ENCODE measurements at regions of chr16 and their contacts with region 1.

Region 1: GRCh38 chr16:66977341-66978113 is 10.9 kb upstream of the CES4A start:
- DNase-seq: peak; percentile 95
- H3K4me3 Mint-ChIP-seq: no peak overlapping the region
- H3K27ac Mint-ChIP-seq: peak overlapping the region; percentile 54
- H3K4me1 Mint-ChIP-seq: peaks cover 50% of the 10 kb centered on the region
- H3K27me3 Mint-ChIP-seq: no peaks in the 10 kb centered on the region

Region 2: GRCh38 chr16:66954097-66954659 is 23.3 kb before region 1 on chr16:
- CTCF ChIA-PET with region 1: interaction called, 10 read pairs
- POLR2A ChIA-PET with region 1: no interaction called
- intact Hi-C with region 1: loop called (anchors 1 kb)
- DNase-seq: peak; percentile 88
- H3K4me3 Mint-ChIP-seq: no peak overlapping the region
- H3K27ac Mint-ChIP-seq: peak overlapping the region; percentile 9
- H3K4me1 Mint-ChIP-seq: peaks cover 15% of the 10 kb centered on the region
- H3K27me3 Mint-ChIP-seq: peaks cover 31% of the 10 kb centered on the region

Region 3: GRCh38 chr16:66991545-66992077 is 14.1 kb after region 1 on chr16:
- CTCF ChIA-PET with region 1: interaction called, 12 read pairs
- POLR2A ChIA-PET with region 1: no interaction called
- intact Hi-C with region 1: no loop called
- DNase-seq: no peak
- H3K4me3 Mint-ChIP-seq: no peak overlapping the region
- H3K27ac Mint-ChIP-seq: no peak overlapping the region
- H3K4me1 Mint-ChIP-seq: peaks cover 14% of the 10 kb centered on the region
- H3K27me3 Mint-ChIP-seq: no peaks in the 10 kb centered on the region

Region 4: GRCh38 chr16:67104061-67104460 is 126.5 kb after region 1 on chr16:
- CTCF ChIA-PET with region 1: interaction called, 10 read pairs
- POLR2A ChIA-PET with region 1: no interaction called
- intact Hi-C with region 1: loop called (anchors 1 kb)
- DNase-seq: no peak
- H3K4me3 Mint-ChIP-seq: peak overlapping the region; percentile 0
- H3K27ac Mint-ChIP-seq: no peak overlapping the region
- H3K4me1 Mint-ChIP-seq: peaks cover 7% of the 10 kb centered on the region
- H3K27me3 Mint-ChIP-seq: no peaks in the 10 kb centered on the region

Region 5: DNA sequence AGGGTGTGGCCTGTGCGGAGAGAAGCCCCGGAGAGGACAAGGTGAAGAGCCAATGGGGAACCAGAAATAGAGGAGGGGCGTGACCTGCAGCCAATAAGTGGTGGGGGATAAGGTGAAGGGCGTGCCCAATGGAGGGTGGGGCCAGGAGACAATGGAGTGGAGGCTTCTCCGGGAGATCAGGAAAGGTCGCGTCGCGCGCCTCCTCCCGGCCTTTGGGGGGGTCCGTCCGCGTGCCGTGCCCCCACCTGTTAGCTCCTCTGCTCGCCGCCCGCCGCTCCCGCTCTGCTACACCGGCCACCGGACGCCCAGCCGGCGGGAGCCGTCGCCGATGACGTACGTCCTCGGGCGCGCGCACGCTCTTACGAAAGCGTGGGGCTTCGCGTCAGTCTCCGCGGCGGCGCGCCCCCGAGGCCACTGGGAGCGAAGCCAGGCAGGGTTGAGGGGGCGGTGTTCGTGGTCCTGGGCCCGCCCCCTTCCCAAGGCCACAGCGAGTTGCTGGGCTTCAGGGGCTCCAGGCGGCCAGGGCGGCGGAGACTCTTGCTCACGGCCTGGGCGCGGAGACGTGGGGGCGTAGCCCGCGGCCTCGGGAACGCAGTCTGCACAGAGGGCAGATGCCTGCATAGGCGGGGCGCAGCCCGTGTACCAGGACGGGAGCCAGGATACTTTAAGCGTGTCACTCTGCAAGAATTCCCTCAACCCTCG is 206.3 kb after region 1 on chr16 and contains the start of gene MATCAP1:
- CTCF ChIA-PET with region 1: interaction called, 15 read pairs
- POLR2A ChIA-PET with region 1: no interaction called
- intact Hi-C with region 1: loop called (anchors 1 kb)
- DNase-seq: peak; percentile 96
- H3K4me3 Mint-ChIP-seq: no peak within 1 kb of the TSS
- H3K27ac Mint-ChIP-seq: no peak within 1 kb of the TSS
- H3K4me1 Mint-ChIP-seq: peaks cover 14% of the 10 kb centered on the region
- H3K27me3 Mint-ChIP-seq: peaks cover 8% of the 10 kb centered on the region
- total RNA-seq, gene MATCAP1: 37.3 to 38.3 TPM